Activated CD8-positive, alpha-beta T cell treated with anti-CD3 and anti-CD28 coated beads, Interleukin-2, amount 10 ng/mL, durations not matched to agents 7 days and 5 days (primary cell): ENCODE measurements at regions of chr12 and their contacts with region 1.

Region 1: DNA sequence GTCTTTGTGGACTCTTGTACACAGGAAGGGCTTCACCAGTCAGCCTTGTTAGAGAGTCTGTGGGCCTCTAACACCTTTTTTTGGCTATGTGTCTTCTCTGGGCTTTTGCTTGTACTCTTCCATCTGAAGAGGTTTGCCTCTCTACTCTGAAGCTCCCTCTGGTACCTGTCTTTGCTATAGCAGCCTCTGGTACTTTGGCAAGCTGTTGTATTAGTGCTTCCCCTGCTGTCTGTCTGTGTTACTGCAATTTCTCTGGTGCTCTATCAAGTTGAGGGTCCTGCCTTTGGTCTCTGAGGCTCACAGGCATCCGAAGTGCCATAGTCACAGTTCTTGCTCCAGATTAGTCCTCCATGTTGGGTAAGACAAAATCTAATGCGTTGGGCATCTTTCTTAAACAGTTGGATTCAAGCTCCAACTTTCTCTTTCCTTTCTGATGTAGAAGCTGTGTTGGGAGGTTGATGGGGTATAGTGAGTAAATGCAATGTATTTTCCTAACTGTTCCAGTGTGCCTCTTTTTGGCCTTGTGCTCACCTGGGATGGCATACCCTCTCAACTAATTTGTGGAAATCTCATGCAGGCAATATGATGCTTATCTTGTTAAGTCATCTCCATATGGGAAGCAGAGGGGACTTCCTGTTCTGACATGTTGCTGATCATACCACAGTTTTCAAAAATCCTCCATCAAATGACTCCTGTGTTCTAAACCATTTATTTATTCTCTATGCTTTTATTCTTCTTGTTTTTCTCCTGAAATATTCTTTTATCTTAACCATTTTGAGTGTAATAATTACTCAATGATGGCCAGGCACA is 88.8 kb downstream of the ATF7IP start:
- DNase-seq: peak; percentile 59
- ATAC-seq: peak; percentile 84
- H3K4me3 Mint-ChIP-seq: no peak overlapping the region
- H3K27ac Mint-ChIP-seq: peak overlapping the region; percentile 74
- H3K4me1 Mint-ChIP-seq: peaks cover 42% of the 10 kb centered on the region
- H3K27me3 Mint-ChIP-seq: no peaks in the 10 kb centered on the region

Region 2: GRCh38 chr12:14185427-14186192 is 268.7 kb before region 1 on chr12:
- CTCF ChIA-PET with region 1: interaction called, 16 read pairs
- POLR2A ChIA-PET with region 1: no interaction called
- DNase-seq: peak; percentile 38
- ATAC-seq: peak; percentile 44
- H3K4me3 Mint-ChIP-seq: no peak overlapping the region
- H3K27ac Mint-ChIP-seq: no peak overlapping the region
- H3K4me1 Mint-ChIP-seq: no peaks in the 10 kb centered on the region
- H3K27me3 Mint-ChIP-seq: peaks cover 5% of the 10 kb centered on the region

Region 3: DNA sequence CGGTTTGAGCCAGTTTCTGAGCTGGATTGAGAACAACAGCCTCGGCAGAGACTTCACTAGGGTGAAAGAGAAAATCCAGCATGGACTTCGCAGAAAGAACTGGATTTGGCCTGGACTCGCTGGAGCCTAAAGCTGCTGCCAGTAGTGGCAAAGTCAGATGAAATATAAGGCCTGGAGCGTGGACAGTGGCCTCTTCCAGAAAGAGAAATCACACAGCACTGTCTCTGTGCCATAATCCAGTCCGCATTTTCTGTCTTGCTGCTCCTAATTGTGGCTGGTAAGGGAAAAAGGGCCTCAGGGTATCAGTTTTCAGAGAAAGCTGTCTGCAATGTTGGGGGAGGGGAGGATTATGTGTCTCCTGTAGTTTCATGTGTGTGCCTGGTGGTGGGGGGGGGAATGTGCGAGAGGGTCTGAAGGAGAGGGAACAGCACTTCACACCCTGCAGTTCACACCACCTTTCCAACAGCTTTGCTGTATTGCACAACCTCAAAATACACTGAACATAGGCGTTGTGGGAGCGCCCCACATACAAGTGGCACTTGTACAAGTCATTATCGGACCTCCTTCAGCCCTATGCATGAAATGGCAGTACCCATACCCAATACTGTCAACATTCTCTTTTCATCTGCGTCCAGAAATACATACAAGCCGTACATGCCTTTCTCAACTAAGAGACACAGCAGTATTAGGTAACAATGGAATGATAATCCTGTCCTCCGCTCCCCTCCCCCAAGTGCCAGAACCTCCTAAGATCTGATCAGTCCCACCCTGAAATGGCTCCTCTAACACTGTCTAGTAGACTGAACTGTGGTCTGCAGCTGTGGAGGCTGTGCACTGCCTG is 196.3 kb before region 1 on chr12:
- CTCF ChIA-PET with region 1: interaction called, 21 read pairs
- POLR2A ChIA-PET with region 1: interaction called, 5 read pairs
- DNase-seq: peak; percentile 87
- ATAC-seq: peak; percentile 67
- H3K4me3 Mint-ChIP-seq: peak overlapping the region; percentile 29
- H3K27ac Mint-ChIP-seq: peak overlapping the region; percentile 99
- H3K4me1 Mint-ChIP-seq: peaks cover 54% of the 10 kb centered on the region
- H3K27me3 Mint-ChIP-seq: no peaks in the 10 kb centered on the region

Region 4: GRCh38 chr12:14373217-14373616 is 81.1 kb before region 1 on chr12:
- CTCF ChIA-PET with region 1: interaction called, 20 read pairs
- POLR2A ChIA-PET with region 1: interaction called, 3 read pairs
- DNase-seq: no peak
- ATAC-seq: peak; percentile 43
- H3K4me3 Mint-ChIP-seq: peak overlapping the region; percentile 35
- H3K27ac Mint-ChIP-seq: peak overlapping the region; percentile 60
- H3K4me1 Mint-ChIP-seq: peaks cover 52% of the 10 kb centered on the region
- H3K27me3 Mint-ChIP-seq: no peaks in the 10 kb centered on the region

Region 5: GRCh38 chr12:14417715-14418114 is 36.6 kb before region 1 on chr12:
- CTCF ChIA-PET with region 1: interaction called, 18 read pairs
- POLR2A ChIA-PET with region 1: no interaction called
- DNase-seq: peak; percentile 85
- ATAC-seq: peak; percentile 76
- H3K4me3 Mint-ChIP-seq: peak overlapping the region; percentile 72
- H3K27ac Mint-ChIP-seq: peak overlapping the region; percentile 91
- H3K4me1 Mint-ChIP-seq: peaks cover 60% of the 10 kb centered on the region
- H3K27me3 Mint-ChIP-seq: no peaks in the 10 kb centered on the region

Region 6: GRCh38 chr12:14482886-14483285 is 28.6 kb after region 1 on chr12:
- CTCF ChIA-PET with region 1: no interaction called
- POLR2A ChIA-PET with region 1: no interaction called
- DNase-seq: no peak
- ATAC-seq: no peak
- H3K4me3 Mint-ChIP-seq: no peak overlapping the region
- H3K27ac Mint-ChIP-seq: no peak overlapping the region
- H3K4me1 Mint-ChIP-seq: no peaks in the 10 kb centered on the region
- H3K27me3 Mint-ChIP-seq: no peaks in the 10 kb centered on the region

Region 7: DNA sequence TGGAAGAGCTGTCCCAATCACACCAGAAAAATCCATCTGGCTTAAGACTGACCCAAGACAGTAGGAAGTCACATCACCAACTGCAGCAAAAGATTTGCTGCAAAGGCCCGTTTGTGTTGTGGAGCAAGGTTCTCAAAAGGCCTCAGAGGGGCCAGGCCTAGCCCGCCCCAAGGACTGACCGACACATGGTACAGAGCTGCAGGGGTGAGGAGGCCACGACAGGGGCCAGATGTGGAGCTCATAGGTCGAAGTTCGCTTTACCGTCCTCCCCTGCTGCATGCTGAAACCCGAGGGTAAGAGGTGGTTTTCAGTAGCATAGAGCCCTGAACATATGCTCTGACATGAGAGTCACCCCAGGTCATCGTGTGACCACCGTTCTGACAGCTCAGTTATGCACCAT is 77.8 kb after region 1 on chr12:
- CTCF ChIA-PET with region 1: no interaction called
- POLR2A ChIA-PET with region 1: no interaction called
- DNase-seq: no peak
- ATAC-seq: no peak
- H3K4me3 Mint-ChIP-seq: no peak overlapping the region
- H3K27ac Mint-ChIP-seq: no peak overlapping the region
- H3K4me1 Mint-ChIP-seq: no peaks in the 10 kb centered on the region
- H3K27me3 Mint-ChIP-seq: no peaks in the 10 kb centered on the region

Region 8: GRCh38 chr12:14635776-14636175 is 181.5 kb after region 1 on chr12:
- CTCF ChIA-PET with region 1: no interaction called
- POLR2A ChIA-PET with region 1: no interaction called
- DNase-seq: no peak
- ATAC-seq: no peak
- H3K4me3 Mint-ChIP-seq: no peak overlapping the region
- H3K27ac Mint-ChIP-seq: no peak overlapping the region
- H3K4me1 Mint-ChIP-seq: peaks cover 4% of the 10 kb centered on the region
- H3K27me3 Mint-ChIP-seq: peaks cover 23% of the 10 kb centered on the region